PC-3 (cell line): ENCODE measurements at regions of chr13 and their contacts with region 1.

Region 1: DNA sequence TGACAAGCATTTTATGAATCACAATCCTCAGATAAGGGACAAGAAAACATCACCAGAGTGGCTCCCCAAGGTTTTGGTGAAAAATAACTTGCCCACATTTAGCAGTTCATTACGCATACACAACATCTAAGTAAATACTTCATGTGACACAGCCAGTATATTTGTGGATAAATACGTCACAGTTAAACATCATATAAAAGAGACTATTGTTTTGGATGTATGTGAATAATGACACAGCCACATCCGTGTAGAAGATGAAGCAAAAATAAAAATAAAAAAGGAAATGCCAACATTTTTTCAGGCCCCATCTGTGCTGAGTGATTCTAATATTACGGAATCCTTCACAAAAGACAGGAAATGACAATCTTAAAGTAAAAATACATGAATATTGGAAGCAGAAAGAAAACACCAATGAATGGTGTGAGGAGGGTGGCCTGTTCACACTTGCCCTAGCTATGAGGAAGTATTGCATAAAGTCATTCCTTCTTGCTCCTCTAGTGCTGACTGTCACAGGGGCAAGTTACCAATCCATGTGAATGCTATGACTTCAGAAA is 457.1 kb downstream of the KLF12 start:
- DNase-seq: peak; percentile 71
- ATAC-seq: peak; percentile 45
- H3K4me3 ChIP-seq: no peak overlapping the region
- H3K27ac ChIP-seq: peak overlapping the region; percentile 100
- H3K4me1 ChIP-seq: peaks cover 51% of the 10 kb centered on the region
- H3K27me3 ChIP-seq: no peaks in the 10 kb centered on the region
- CTCF ChIP-seq: no peak

Region 2: GRCh38 chr13:73428137-73428536 is 249.0 kb before region 1 on chr13:
- CTCF ChIA-PET with region 1: no interaction called
- POLR2A ChIA-PET with region 1: no interaction called
- intact Hi-C with region 1: loop called (anchors 2 kb)
- DNase-seq: peak; percentile 84
- ATAC-seq: peak; percentile 71
- H3K4me3 ChIP-seq: no peak overlapping the region; the same call in 1 of the 2 replicates
- H3K27ac ChIP-seq: peak overlapping the region; percentile 99
- H3K4me1 ChIP-seq: peaks cover 37% of the 10 kb centered on the region
- H3K27me3 ChIP-seq: no peaks in the 10 kb centered on the region
- CTCF ChIP-seq: no peak

Region 3: DNA sequence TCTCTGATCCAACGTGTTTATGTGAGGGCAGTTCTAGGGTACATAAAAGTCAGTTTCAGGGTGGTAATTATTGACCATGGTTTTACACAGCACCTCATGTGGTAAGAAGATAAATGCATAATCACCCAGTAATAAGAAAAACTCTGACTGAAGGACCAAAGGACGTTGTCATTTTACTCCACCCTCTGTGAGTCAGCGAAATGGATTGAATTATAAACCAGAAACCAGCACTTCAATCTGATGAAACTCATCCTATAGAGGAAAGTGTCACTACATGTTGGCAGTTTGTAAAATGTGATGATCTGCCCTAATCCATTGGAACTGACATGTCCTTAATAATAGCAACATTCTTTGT is 211.5 kb before region 1 on chr13:
- CTCF ChIA-PET with region 1: no interaction called
- POLR2A ChIA-PET with region 1: no interaction called
- intact Hi-C with region 1: loop called (anchors 5 kb)
- DNase-seq: peak; percentile 85
- ATAC-seq: peak; percentile 84
- H3K4me3 ChIP-seq: no peak overlapping the region
- H3K27ac ChIP-seq: peak overlapping the region; percentile 97
- H3K4me1 ChIP-seq: peaks cover 31% of the 10 kb centered on the region
- H3K27me3 ChIP-seq: no peaks in the 10 kb centered on the region
- CTCF ChIP-seq: no peak

Region 4: DNA sequence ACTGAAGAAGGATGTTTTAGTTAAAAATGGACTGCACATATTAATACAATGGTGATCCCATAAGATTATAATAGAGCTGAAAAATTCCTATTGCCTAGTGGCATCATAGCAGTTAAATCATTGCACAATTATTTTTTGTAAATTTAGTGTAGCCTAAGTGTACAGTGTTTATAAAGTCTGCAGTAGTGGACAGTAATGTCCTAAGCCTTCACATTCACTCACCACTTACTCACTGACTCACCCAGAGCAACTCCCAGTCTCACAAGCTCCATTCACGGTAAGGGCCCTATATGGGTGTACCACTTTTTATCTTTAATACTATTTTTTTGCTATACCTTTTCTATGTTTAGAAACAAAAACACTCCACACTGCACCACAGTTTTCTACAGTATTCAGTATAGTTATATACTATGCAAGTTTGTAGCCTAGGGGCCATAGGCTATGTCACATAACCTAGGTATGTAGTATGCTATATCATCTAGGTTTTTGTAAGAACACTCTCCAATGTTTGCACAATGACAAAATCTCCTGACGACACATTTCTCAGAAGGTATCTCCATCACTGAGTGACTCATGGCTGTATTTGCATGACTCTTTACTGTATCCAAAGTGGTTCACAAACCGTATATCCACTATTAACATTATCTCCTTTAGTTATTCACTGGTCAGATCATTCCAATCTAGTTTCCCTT is 79.0 kb before region 1 on chr13:
- CTCF ChIA-PET with region 1: no interaction called
- POLR2A ChIA-PET with region 1: no interaction called
- intact Hi-C with region 1: loop called (anchors 5 kb)
- DNase-seq: peak; percentile 93
- ATAC-seq: peak; percentile 88
- H3K4me3 ChIP-seq: no peak overlapping the region
- H3K27ac ChIP-seq: peak overlapping the region; percentile 99
- H3K4me1 ChIP-seq: peaks cover 49% of the 10 kb centered on the region
- H3K27me3 ChIP-seq: no peaks in the 10 kb centered on the region
- CTCF ChIP-seq: no peak

Region 5: GRCh38 chr13:73708393-73708985 is 31.4 kb after region 1 on chr13:
- CTCF ChIA-PET with region 1: interaction called, 3 read pairs
- POLR2A ChIA-PET with region 1: no interaction called
- intact Hi-C with region 1: loop called (anchors 2 kb)
- DNase-seq: peak; percentile 77
- ATAC-seq: peak; percentile 81
- H3K4me3 ChIP-seq: no peak overlapping the region
- H3K27ac ChIP-seq: peak overlapping the region; percentile 54; the same call in 1 of the 2 replicates
- H3K4me1 ChIP-seq: no peaks in the 10 kb centered on the region
- H3K27me3 ChIP-seq: no peaks in the 10 kb centered on the region
- CTCF ChIP-seq: peak; percentile 89